Right lobe of liver (tissue), 6 donors: ENCODE measurements at regions of chr14 and their contacts with region 1.

Region 1: GRCh38 chr14:94129111-94129757 is at the start of gene IFI27L2:
- DNase-seq: peak in 1 of 3 donors; percentile 68
- ATAC-seq: peak; percentile 81 to 89 (median 82)
- H3K4me3 ChIP-seq: peak within 1 kb of the TSS; percentile 28 to 45 (median 30)
- H3K27ac ChIP-seq: no peak within 1 kb of the TSS
- H3K4me1 ChIP-seq: peaks cover 0 to 7% (median 0%) of the 10 kb centered on the region in 4 donors
- H3K27me3 ChIP-seq: no peaks in the 10 kb centered on the region
- CTCF ChIP-seq: peak in 2 of 4 donors; percentile 25 to 29
- POLR2A ChIP-seq: no peak
- total RNA-seq, gene IFI27L2: 1.8 to 7.9 (median 4.1) TPM in 5 of 6 experiments, not detected in the other

Region 2: GRCh38 chr14:94041551-94042346 is 87.5 kb before region 1 on chr14:
- intact Hi-C with region 1: loop called (anchors 10 kb)
- DNase-seq: peak in 1 of 3 donors; percentile 68
- ATAC-seq: peak; percentile 47 to 95 (median 69)
- H3K4me3 ChIP-seq: no peak overlapping the region
- H3K27ac ChIP-seq: no peak overlapping the region
- H3K4me1 ChIP-seq: peaks cover 0 to 8% (median 0%) of the 10 kb centered on the region in 4 donors
- H3K27me3 ChIP-seq: no peaks in the 10 kb centered on the region
- CTCF ChIP-seq: no peak
- POLR2A ChIP-seq: no peak

Region 3: GRCh38 chr14:94227029-94227428 is 97.8 kb after region 1 on chr14:
- intact Hi-C with region 1: no loop called
- DNase-seq: no peak
- ATAC-seq: no peak
- H3K4me3 ChIP-seq: no peak overlapping the region
- H3K27ac ChIP-seq: no peak overlapping the region
- H3K4me1 ChIP-seq: no peaks in the 10 kb centered on the region
- H3K27me3 ChIP-seq: no peaks in the 10 kb centered on the region
- CTCF ChIP-seq: no peak
- POLR2A ChIP-seq: no peak

Region 4: GRCh38 chr14:94269156-94269555 is 139.9 kb after region 1 on chr14:
- intact Hi-C with region 1: no loop called
- DNase-seq: no peak
- ATAC-seq: no peak
- H3K4me3 ChIP-seq: no peak overlapping the region
- H3K27ac ChIP-seq: no peak overlapping the region
- H3K4me1 ChIP-seq: no peaks in the 10 kb centered on the region
- H3K27me3 ChIP-seq: no peaks in the 10 kb centered on the region
- CTCF ChIP-seq: no peak
- POLR2A ChIP-seq: no peak

Region 5: DNA sequence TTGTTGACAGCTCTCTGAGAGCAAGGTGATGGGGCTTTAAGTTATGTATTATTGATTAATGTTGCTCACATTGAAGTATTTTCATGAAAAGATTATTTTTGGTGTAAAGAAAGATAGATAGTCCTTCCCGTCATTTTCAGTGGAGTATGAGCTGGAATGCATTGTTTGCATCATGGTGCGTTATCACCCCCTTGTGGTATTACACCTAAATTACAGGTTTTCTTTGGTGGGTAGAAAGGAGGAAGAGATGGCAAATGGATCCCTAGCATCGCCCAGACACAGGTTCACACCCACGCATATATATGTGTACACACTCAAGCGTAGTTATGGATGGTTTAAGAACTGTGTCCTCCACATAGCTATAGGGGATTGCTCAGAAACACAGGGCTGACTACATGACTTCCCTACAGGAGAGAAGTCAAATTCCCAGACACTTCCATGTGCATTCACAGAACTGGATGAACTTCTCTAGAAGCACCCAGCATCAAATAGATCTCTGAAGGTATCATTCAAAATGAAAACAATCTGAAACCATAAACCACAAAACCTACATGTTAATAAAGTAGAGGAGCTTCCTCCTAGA is 178.3 kb after region 1 on chr14:
- intact Hi-C with region 1: no loop called
- DNase-seq: no peak
- ATAC-seq: peak; percentile 25 to 64 (median 38)
- H3K4me3 ChIP-seq: no peak overlapping the region
- H3K27ac ChIP-seq: no peak overlapping the region
- H3K4me1 ChIP-seq: peaks cover 0 to 27% (median 8%) of the 10 kb centered on the region in 4 donors
- H3K27me3 ChIP-seq: no peaks in the 10 kb centered on the region
- CTCF ChIP-seq: peak; percentile 47 to 64 (median 54)
- POLR2A ChIP-seq: no peak